AG04450 (cell line): ENCODE measurements at regions of chr15 and their contacts with region 1.

Region 1: GRCh38 chr15:89760303-89761008 is 9.4 kb upstream of the MESP1 start:
- DNase-seq: no peak
- H3K4me3 ChIP-seq: no peak overlapping the region
- H3K27ac ChIP-seq: no peak overlapping the region
- H3K27me3 ChIP-seq: no peaks in the 10 kb centered on the region
- CTCF ChIP-seq: peak; percentile 98

Region 2: GRCh38 chr15:89776274-89777072 is 16.0 kb after region 1 on chr15 and contains the start of gene MESP2:
- CTCF ChIA-PET with region 1: interaction called, 58 read pairs
- POLR2A ChIA-PET with region 1: no interaction called
- DNase-seq: no peak
- H3K4me3 ChIP-seq: peak within 1 kb of the TSS; percentile 57
- H3K27ac ChIP-seq: no peak within 1 kb of the TSS
- H3K27me3 ChIP-seq: no peaks in the 10 kb centered on the region
- CTCF ChIP-seq: peak; percentile 44
- polyA plus RNA-seq, gene MESP2: 0.20 and 0.22 TPM in 2 replicates

Region 3: DNA sequence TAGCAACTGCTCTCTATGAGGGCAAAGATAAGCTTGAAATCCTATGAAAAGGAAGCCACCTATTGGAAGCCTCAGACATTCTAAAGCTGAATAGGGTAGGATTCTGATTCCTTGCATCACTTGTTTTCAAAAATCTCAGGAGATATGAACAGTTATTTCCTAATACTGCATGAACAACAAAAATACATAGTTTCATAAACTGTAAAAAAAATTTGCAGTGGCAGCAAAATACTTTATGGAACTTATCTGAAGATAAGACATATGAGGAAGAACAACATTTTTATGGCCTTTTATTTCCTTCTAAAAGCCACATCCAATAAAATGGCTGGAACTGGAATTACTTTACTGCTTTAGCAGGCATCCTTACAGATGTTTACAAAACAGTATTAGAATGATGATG is 103.5 kb after region 1 on chr15:
- CTCF ChIA-PET with region 1: interaction called, 12 read pairs
- POLR2A ChIA-PET with region 1: no interaction called
- DNase-seq: no peak
- H3K4me3 ChIP-seq: no peak overlapping the region
- H3K27ac ChIP-seq: no peak overlapping the region
- H3K27me3 ChIP-seq: no peaks in the 10 kb centered on the region
- CTCF ChIP-seq: no peak

Region 4: GRCh38 chr15:89926158-89926557 is 165.7 kb after region 1 on chr15:
- CTCF ChIA-PET with region 1: no interaction called
- POLR2A ChIA-PET with region 1: no interaction called
- DNase-seq: no peak
- H3K4me3 ChIP-seq: no peak overlapping the region
- H3K27ac ChIP-seq: no peak overlapping the region
- H3K27me3 ChIP-seq: peaks cover 3% of the 10 kb centered on the region
- CTCF ChIP-seq: no peak